ENCODE measurements at regions of chr2 and their contacts with region 1.

Region 1: DNA sequence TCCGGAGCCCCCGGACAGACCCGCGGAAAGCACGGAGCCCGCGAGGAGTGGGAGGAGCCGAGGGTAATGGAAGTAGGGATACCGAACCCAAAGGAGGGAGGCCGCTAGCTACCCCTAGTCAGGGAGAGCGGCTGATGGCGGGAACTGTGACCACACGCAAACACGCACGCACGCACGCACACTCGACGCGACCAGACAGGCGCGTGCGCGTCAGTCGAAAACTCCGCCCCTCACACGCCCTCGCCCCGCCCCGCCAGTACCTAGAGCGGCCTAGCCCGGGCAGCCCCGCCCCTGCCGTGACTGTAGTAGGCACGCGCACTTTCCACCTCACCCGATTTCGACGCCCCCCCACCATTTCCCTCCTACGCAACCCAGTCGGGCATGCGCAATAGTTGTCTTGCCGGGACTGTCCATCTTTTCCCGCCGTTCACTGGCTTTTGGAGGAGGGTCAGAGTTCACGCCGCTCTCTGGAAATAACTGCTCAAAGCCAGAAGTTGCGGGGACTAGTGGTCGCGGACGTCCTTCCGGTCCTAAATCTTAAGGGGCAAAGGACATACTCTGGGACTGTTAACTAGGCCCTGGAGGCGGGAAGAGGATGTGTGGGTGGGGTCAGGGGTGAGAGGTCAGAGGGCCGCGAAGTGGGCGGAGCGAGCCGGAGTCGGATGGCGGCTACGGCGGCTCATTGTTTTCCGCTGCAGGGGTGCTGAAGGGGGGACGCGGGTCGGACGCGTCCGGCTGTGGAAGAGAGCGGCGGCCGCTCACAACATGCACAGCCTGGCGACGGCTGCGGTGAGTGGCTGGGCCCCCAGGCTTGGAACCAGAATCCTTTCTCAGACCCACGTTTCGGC is at the starts of genes CNOT9 and USP37:
- DNase-seq: peak; percentile 100
- H3K4me3 Mint-ChIP-seq: peak within 1 kb of the TSS; percentile 93
- H3K27ac Mint-ChIP-seq: peak within 1 kb of the TSS; percentile 93
- H3K4me1 Mint-ChIP-seq: peaks cover 48% of the 10 kb centered on the region
- H3K27me3 Mint-ChIP-seq: no peaks in the 10 kb centered on the region
- total RNA-seq, gene CNOT9: 127 and 135 TPM in 2 replicates
- total RNA-seq, gene USP37: 40.7 and 43.7 TPM in 2 replicates

Region 2: DNA sequence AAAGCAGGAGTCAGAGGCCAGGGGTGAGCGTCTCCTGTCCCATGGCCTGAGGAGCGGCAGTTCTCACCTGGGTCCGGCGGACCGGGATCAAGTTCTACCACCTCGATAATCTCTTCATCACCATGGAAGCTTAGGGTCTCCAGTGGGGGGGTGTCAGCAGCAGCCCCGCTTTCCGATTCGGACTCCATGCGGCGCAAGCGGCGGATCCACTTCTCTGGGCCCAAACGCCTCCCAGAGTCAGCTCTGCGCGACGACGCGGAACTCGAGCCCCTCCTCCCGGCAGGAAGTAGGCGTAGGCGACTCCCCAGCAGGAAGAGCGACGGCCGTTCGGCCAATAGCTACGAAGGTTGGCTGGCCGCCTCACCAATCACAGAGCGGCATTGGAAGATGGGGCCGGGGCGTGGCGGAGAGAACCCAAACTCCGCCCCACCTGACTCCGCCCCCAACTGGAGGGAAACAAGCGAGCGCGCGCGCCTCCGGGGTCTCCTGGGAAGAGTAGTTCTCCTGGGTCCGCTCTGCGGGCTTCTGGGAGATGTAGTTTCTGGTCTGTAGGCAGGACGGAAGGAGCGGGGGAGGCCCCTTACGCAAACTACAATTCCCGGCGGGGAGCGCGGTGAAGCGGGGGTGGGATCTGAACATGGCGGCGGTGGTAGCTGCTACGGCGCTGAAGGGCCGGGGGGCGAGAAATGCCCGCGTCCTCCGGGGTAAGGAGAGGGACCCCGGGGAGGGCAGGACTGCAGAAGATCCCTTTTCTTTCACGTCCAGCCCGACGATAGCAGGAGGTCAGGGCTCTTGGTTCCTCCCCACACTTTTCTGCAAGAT is 298.3 kb before region 1 on chr2 and contains the starts of genes AAMP and PNKD:
- intact Hi-C with region 1: loop called (anchors 1 kb)
- DNase-seq: peak; percentile 100
- H3K4me3 Mint-ChIP-seq: peak within 1 kb of the TSS; percentile 94
- H3K27ac Mint-ChIP-seq: peak within 1 kb of the TSS; percentile 93
- H3K4me1 Mint-ChIP-seq: peaks cover 20% of the 10 kb centered on the region
- H3K27me3 Mint-ChIP-seq: no peaks in the 10 kb centered on the region
- total RNA-seq, gene AAMP: 82.4 and 82.9 TPM in 2 replicates
- total RNA-seq, gene PNKD: 19.9 and 20.8 TPM in 2 replicates

Region 3: DNA sequence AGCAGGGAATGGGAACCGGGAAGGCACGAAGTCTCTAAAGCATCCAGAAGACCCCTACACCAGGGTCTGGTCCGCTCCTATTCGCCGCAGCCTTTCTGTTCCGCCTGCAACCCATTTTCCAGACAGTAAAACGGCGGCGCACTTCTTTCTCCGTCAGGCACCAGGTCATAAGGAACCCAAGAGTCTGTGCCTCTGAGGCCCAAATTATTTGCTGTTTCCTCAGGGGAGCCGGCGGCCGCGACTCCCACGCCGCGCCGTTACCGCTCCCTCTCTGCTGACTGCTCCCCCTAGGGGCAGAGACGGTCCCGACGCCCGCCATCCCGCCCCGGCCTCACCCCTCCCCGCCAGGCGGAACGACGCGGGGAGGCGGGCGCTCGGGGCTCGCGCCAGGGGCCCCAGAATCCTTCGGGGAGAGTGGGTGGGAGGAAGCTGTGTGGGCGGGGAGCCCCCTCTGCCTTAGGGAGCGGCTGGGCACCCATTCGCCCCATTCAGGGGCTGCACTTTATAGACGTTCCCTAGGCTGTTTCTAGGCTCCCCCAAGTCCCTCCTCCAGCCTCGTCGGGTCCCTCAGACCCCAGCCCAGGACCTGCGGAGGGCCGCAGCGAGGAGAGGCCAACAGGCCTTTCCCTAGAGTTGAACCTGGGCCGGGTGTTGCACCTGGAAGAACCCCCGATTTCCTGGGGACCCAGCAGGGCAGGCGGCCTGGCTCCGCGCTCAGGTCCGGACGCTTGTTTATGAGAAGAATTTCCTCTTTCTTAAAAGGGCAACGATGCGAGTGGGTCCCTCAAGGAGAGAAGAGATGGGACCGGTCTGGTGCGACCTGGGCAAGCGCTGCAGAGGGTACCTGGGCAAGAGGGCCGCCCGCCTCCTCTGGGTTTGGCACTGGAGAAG is 172.4 kb before region 1 on chr2:
- intact Hi-C with region 1: loop called (anchors 1 kb)
- DNase-seq: peak; percentile 93
- H3K4me3 Mint-ChIP-seq: peak overlapping the region; percentile 86
- H3K27ac Mint-ChIP-seq: peak overlapping the region; percentile 93
- H3K4me1 Mint-ChIP-seq: peaks cover 30% of the 10 kb centered on the region
- H3K27me3 Mint-ChIP-seq: no peaks in the 10 kb centered on the region

Region 4: GRCh38 chr2:218516614-218517013 is 51.8 kb before region 1 on chr2:
- intact Hi-C with region 1: no loop called
- DNase-seq: no peak
- H3K4me3 Mint-ChIP-seq: no peak overlapping the region
- H3K27ac Mint-ChIP-seq: no peak overlapping the region
- H3K4me1 Mint-ChIP-seq: peaks cover 21% of the 10 kb centered on the region
- H3K27me3 Mint-ChIP-seq: no peaks in the 10 kb centered on the region

Region 5: DNA sequence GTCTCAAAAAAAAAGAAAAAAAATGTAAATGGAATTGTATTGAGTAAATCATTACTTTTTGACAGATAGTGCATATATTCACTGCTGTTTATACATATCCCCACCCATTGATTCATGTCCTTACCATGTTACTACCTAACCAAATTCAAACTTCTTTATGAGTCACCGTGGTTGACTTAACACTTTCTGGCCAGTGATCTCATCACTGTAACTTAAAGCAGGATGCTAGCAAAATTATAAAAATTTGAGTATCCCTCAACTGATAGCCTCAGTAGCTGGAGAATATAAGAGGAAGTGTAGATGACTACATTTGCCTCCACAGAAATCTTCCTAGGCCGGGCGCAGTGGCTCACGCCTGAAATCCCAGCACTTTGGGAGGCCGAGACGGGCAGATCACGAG is 13.7 kb after region 1 on chr2:
- intact Hi-C with region 1: loop called (anchors 1 kb)
- DNase-seq: no peak
- H3K4me3 Mint-ChIP-seq: no peak overlapping the region
- H3K27ac Mint-ChIP-seq: peak overlapping the region; percentile 77
- H3K4me1 Mint-ChIP-seq: peaks cover 33% of the 10 kb centered on the region
- H3K27me3 Mint-ChIP-seq: no peaks in the 10 kb centered on the region

Region 6: DNA sequence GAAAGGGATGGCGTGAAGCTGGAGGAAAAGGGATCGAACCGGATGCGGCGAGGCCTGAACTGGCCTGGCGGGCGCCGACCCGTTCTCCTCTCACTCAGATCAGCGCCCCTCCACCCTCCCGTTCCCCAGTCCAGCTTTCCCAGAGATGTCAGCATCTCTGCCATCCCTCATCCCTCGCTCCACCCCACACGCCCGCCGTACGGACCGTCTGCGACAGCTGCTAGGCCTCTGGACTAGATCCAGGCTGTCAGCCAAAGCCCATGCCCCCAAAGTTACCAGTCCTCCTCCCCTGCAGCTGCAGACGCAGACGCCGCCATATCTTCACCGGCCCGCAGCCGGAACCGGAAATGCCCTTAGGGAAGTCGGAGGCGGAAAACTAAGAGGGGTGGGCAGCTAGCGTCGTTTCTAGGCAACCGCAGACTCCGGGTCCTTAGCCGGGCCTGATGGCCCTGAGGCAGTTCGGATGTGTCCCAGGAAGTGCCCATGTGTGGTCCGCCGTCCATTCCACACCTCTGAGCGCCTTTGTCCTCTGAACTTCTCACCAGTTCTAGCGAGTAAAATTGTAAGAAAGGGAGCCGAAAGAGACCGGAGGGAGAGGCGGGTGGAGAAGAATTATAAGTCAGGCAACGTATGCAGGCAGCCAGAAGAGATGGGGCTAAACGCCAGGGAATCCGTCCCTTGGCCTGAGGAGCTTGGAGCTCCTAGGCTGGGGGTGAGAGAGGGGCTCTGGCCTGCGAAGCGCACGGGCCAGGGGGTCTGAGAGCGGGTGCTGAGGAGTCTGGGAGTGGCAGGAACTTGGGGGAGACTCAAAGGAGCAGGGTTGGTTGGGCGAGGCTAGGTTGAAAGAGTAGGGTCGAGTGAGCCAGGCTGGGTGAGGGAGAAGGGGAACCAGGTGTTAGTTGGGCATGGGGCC is 103.5 kb after region 1 on chr2 and contains the starts of genes RNF25 and STK36:
- intact Hi-C with region 1: loop called (anchors 1 kb)
- DNase-seq: peak; percentile 75
- H3K4me3 Mint-ChIP-seq: peak within 1 kb of the TSS; percentile 92
- H3K27ac Mint-ChIP-seq: peak within 1 kb of the TSS; percentile 86
- H3K4me1 Mint-ChIP-seq: peaks cover 21% of the 10 kb centered on the region
- H3K27me3 Mint-ChIP-seq: no peaks in the 10 kb centered on the region
- total RNA-seq, gene RNF25: 21.6 and 25.8 TPM in 2 replicates
- total RNA-seq, gene STK36: 14.4 and 17.9 TPM in 2 replicates

Region 7: DNA sequence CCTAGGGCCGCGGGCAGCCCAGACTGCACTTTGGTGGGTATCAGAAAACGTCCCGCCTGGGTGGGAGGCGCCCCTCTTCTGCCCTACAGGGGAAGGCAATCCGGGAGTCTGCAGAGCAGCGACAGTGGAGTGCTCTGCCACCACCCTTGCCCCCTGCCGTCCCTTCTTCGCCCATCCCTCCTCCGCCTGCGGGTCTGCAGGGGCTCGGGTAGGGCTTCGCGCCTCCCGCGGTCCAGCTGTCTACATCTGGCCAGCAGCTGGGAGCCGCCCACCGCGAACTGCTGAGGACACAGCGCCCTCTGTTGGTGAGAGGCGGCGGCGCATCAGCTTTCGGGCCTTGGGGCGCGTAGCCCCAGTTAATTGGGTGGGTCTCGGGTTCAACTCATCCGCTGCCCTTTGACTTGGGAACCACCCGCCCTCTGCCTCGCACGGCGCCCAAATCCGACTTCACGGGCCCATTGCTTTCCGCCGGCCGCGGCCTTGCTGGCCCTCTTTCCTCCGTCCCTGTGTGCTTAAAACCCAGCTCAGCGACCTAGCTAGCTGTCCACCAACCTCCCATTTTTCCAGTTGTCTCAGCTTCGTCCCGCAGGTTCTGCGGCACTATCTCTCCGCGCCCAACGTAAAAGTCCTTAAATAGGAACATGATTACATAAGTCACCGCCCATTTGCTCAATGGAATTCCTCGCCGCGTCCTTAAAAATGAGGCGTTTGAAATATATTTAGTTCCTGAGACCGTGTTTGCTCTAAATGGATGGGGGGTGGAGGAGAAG is 329.9 kb after region 1 on chr2:
- intact Hi-C with region 1: loop called (anchors 1 kb)
- DNase-seq: peak; percentile 74
- H3K4me3 Mint-ChIP-seq: peak overlapping the region; percentile 68
- H3K27ac Mint-ChIP-seq: peak overlapping the region; percentile 68
- H3K4me1 Mint-ChIP-seq: peaks cover 33% of the 10 kb centered on the region
- H3K27me3 Mint-ChIP-seq: peaks cover 47% of the 10 kb centered on the region

Region 8: GRCh38 chr2:219149667-219150066 is 581.3 kb after region 1 on chr2:
- intact Hi-C with region 1: no loop called
- DNase-seq: no peak
- H3K4me3 Mint-ChIP-seq: no peak overlapping the region
- H3K27ac Mint-ChIP-seq: no peak overlapping the region
- H3K4me1 Mint-ChIP-seq: no peaks in the 10 kb centered on the region
- H3K27me3 Mint-ChIP-seq: no peaks in the 10 kb centered on the region